ENCODE measurements at regions of chr1 and their contacts with region 1.

Region 1: DNA sequence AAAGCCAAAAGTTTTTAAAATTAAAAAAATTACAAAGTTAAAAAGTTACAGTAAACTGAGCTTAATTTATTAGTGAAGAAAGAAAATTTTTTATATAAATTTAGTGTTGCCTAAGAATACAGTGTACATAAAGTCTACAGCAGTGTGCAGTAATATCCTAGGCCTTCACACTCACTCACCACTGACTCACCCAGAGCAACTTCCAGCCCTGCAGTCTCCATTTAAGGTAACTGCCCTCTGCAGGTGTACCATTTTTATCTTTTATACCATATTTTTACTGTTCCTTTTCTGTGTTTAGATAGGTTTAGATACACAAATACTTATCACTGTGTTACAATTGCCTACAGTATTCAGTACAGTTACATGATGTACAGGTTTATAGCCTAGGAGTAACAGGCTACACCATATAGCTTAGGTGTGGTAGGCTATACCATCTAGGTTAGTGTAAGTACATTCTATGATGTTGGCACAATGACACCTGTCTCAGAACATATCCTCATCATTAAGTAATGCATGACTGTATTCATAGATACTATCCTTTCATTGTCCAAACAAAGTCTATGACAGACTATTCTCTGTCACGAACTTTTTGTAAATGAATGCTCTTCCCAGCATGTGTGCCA is 78.6 kb upstream of the PBX1 start:
- DNase-seq: no peak
- ATAC-seq: no peak
- H3K4me3 ChIP-seq: no peak overlapping the region
- H3K27ac ChIP-seq: no peak overlapping the region
- H3K4me1 ChIP-seq: no peaks in the 10 kb centered on the region
- H3K27me3 ChIP-seq: no peaks in the 10 kb centered on the region
- CTCF ChIP-seq: no peak
- POLR2A ChIP-seq: no peak
- RAD21 ChIP-seq: no peak

Region 2: DNA sequence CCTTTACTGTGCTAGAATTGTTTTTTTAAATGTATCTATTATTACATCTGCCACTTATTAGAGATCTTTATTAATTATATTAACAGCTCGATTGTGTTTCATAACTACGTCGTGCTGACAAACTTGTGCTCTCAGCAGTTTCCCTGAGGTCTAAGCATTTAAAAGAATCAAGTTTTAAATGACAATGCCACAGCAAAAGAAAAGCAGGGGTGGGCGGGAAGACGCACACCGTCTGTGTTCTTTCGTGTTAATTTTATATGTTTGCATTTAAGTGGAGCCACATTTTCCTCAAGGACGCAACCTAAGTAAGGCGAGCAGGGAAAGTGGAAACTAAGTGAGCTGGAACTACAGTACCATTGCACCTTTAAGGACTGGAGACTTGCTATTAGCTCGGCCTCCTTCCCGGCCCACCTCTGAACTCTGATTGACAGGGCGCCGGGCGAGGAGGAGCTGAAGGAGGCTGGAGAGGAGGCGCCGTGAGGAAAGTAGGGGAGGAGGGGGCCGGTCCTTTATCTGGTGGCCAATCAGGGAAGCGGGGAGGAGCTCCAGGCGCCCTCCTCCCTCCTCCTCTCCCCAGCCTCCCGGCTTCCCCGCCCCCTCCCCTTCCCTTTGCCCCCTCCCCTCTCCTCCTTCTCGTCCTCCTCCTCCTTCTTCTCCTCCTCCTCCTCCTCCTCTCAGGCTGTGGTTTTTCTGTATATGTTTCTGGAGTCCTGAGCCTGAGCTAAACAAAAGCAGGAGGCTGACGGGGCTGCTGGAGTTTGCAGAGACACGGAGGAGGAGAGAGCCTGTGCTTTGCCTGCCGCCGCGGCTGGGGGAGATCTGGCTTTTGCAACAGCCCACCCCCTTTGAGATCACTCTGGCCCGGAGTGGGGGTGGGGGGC is 78.3 kb after region 1 on chr1 and contains the start of gene PBX1:
- CTCF ChIA-PET with region 1: no interaction called
- POLR2A ChIA-PET with region 1: interaction called, 10 read pairs
- dilution Hi-C with region 1: no loop called
- in situ Hi-C with region 1: no loop called
- intact Hi-C with region 1: no loop called
- DNase-seq: peak; percentile 98
- ATAC-seq: peak; percentile 98
- H3K4me3 ChIP-seq: peak within 1 kb of the TSS; percentile 75
- H3K27ac ChIP-seq: peak within 1 kb of the TSS; percentile 99
- H3K4me1 ChIP-seq: no peaks in the 10 kb centered on the region
- H3K27me3 ChIP-seq: no peaks in the 10 kb centered on the region
- CTCF ChIP-seq: no peak
- POLR2A ChIP-seq: peak; percentile 88
- RAD21 ChIP-seq: no peak; the same call in 1 of the 2 replicates
- total RNA-seq, gene PBX1: 17.5 and 17.9 TPM in 2 replicates